Upper lobe of right lung (tissue), 1 donor: ENCODE measurements at regions of chr3 and their contacts with region 1.

Region 1: DNA sequence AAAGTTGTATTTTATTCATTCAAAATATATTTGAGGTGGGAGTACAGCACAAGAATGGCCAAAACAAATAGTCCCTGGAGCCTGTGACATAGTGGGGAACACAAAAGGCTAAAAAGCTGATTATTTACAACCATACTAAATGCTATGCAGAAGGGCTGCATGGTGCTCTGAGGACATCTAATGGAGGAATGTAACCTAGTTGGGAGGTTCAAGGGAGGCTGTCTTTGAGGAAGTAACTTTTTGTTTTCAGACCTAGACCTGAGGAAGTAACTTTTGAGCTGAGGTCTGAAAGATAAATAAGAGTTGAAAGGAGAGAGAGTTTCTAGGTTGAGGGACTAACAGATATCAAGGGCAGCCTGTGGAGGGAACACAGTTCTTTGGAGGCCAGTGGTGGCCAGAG is 34.8 kb upstream of the RASA2 start:
- DNase-seq: no peak
- ATAC-seq: peak; percentile 80
- H3K4me3 ChIP-seq: no peak overlapping the region
- H3K27ac ChIP-seq: no peak overlapping the region
- H3K4me1 ChIP-seq: peaks cover 9% of the 10 kb centered on the region
- H3K27me3 ChIP-seq: no peaks in the 10 kb centered on the region
- CTCF ChIP-seq: peak; percentile 66

Region 2: GRCh38 chr3:141311496-141312353 is 140.3 kb before region 1 on chr3:
- intact Hi-C with region 1: loop called (anchors 5 kb)
- DNase-seq: peak; percentile 98
- ATAC-seq: peak; percentile 98
- H3K4me3 ChIP-seq: peak overlapping the region; percentile 84
- H3K27ac ChIP-seq: peak overlapping the region; percentile 81
- H3K4me1 ChIP-seq: peaks cover 10% of the 10 kb centered on the region
- H3K27me3 ChIP-seq: no peaks in the 10 kb centered on the region
- CTCF ChIP-seq: peak; percentile 75

Region 3: DNA sequence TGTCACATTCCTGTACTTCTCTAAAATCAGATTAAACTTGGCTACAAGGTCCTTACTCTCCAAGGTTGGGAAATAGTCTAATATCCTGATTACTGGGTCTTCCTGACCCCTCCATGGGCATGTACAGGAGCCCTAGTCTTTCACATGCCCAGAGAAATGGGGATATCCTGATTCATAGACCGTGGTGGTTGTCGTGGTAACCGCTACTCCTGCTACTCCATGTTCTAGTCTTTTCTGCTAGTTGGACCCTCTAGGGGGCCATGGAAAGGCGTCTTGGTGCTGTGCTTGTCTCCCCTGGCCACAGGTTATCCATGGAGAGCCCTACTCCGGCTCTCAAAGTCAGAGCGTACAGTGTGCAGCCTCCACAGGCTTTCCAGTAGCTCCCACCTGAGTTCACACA is 96.8 kb before region 1 on chr3:
- intact Hi-C with region 1: loop called (anchors 5 kb)
- DNase-seq: no peak
- ATAC-seq: no peak
- H3K4me3 ChIP-seq: no peak overlapping the region
- H3K27ac ChIP-seq: no peak overlapping the region
- H3K4me1 ChIP-seq: no peaks in the 10 kb centered on the region
- H3K27me3 ChIP-seq: no peaks in the 10 kb centered on the region
- CTCF ChIP-seq: no peak

Region 4: DNA sequence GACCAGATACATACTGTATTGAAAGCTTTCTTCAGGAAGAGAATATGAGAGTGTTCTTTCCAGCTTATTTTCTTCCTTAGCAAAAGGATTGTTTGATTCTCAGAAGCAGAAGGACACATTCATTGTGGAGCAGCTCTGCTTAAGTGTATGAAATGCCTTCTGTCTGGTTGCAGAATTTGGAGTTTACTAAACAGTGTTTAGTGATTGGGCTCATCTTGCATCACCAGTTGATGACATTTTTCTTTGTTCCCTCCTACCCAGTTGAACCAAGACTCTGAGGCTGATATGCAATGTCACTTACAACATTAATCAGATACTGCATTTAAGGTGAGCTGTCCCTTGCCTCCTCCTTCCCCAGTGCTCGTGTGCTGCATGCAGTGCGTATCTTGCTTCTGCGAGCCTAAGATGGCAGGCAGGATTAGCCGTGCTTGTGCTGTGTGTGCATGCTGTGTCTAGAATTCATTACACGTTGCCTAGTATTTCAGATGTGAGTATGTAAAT is 65.4 kb before region 1 on chr3:
- intact Hi-C with region 1: no loop called
- DNase-seq: no peak
- ATAC-seq: no peak
- H3K4me3 ChIP-seq: peak overlapping the region; percentile 39
- H3K27ac ChIP-seq: peak overlapping the region; percentile 7
- H3K4me1 ChIP-seq: peaks cover 5% of the 10 kb centered on the region
- H3K27me3 ChIP-seq: no peaks in the 10 kb centered on the region
- CTCF ChIP-seq: no peak

Region 5: DNA sequence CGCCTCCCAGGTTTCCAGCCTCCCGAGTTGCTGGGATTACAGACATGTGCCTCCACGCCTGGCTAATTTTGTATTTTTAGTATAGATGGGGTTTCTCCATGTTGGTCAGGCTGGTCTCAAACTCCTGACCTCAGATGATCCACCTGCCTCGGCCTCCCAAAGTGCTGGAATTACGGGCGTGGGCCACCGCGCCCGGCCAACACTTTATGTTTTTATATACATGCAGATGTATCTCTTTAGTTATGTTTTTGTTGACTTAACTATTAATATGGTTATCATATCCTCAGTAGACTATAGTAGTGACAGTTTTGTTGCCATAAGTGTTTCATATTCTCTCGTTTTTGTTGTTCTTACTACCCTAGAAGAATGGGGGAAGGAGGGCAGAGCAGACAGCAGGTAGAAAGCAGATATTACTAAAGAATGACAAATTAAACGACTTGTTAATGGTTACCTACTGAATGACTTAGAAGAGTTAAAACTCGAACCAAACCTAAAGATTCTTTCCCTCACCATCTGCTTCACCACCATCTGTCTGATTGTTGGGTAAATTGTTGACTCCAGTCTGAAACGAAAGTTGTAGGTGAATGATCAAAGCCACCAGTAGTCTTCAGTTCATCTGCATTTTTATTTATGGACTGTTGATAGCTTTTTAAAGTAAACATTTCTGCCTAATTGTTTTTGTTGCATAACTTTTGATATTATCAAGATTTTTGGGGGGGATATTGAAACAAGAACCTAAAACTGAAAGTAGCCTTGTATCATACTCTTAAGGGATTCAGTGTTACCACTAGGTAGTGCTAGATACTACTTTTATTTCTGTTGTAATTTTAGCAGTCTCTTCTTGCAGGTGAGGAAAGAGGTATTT is 124.1 kb after region 1 on chr3:
- intact Hi-C with region 1: no loop called
- DNase-seq: no peak
- ATAC-seq: peak; percentile 49
- H3K4me3 ChIP-seq: no peak overlapping the region
- H3K27ac ChIP-seq: no peak overlapping the region
- H3K4me1 ChIP-seq: no peaks in the 10 kb centered on the region
- H3K27me3 ChIP-seq: no peaks in the 10 kb centered on the region
- CTCF ChIP-seq: peak; percentile 59

Region 6: GRCh38 chr3:142072816-142073215 is 620.8 kb after region 1 on chr3:
- intact Hi-C with region 1: no loop called
- DNase-seq: no peak
- ATAC-seq: no peak
- H3K4me3 ChIP-seq: no peak overlapping the region
- H3K27ac ChIP-seq: no peak overlapping the region
- H3K4me1 ChIP-seq: no peaks in the 10 kb centered on the region
- H3K27me3 ChIP-seq: no peaks in the 10 kb centered on the region
- CTCF ChIP-seq: no peak